ENCODE measurements at regions of chr16 and their contacts with region 1.

Region 1: DNA sequence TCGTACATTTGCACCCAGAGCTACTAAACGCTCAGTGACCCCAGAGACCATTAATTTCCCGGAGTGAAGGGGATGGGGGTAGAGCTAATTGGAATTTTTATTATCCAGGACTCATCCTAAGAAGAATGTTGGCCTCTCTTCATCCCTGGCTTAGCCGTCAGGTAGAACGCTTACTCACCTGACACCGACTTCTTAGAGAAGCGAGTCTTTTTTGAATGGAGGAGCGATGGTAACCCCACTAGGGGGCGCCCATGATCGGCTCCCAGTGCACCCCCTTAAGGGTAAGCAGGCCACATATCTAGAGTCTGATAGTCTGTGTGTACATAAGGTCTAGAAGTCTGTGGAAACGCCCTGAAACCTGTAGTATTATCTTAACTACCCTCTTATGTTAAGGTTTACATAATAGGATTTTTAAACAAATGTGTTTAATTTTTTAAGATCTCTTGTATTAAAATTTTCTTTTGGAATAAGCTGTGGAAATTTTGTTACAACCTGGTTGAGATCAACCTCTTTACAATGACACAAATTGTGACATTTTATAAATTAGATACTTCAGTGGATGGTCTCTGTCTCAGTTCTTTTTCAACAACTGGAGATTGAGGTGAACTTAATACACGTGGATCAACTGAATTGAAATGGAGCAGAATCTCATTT is 229.8 kb downstream of the CPPED1 start:
- DNase-seq: peak; percentile 52
- ATAC-seq: peak; percentile 94
- H3K4me3 ChIP-seq: no peak overlapping the region
- H3K27ac ChIP-seq: no peak overlapping the region
- H3K4me1 ChIP-seq: 0 out of 4 replicates have a peak, but pooled peaks cover 0 to 3% of the 10 kb centered on the region in 2 experiments
- H3K27me3 ChIP-seq: no peaks in the 10 kb centered on the region
- CTCF ChIP-seq: peak; percentile 81 to 93 (median 88)
- POLR2A ChIP-seq: no peak
- RAD21 ChIP-seq: peak; percentile 94

Region 2: GRCh38 chr16:12507366-12507765 is 66.5 kb before region 1 on chr16:
- CTCF ChIA-PET with region 1: no interaction called
- POLR2A ChIA-PET with region 1: no interaction called
- RAD21 ChIA-PET with region 1: no interaction called
- intact Hi-C with region 1: no loop called
- DNase-seq: no peak
- ATAC-seq: no peak
- H3K4me3 ChIP-seq: no peak overlapping the region
- H3K27ac ChIP-seq: no peak overlapping the region
- H3K4me1 ChIP-seq: no peaks in the 10 kb centered on the region
- H3K27me3 ChIP-seq: no peaks in the 10 kb centered on the region
- CTCF ChIP-seq: no peak
- POLR2A ChIP-seq: no peak
- RAD21 ChIP-seq: no peak

Region 3: DNA sequence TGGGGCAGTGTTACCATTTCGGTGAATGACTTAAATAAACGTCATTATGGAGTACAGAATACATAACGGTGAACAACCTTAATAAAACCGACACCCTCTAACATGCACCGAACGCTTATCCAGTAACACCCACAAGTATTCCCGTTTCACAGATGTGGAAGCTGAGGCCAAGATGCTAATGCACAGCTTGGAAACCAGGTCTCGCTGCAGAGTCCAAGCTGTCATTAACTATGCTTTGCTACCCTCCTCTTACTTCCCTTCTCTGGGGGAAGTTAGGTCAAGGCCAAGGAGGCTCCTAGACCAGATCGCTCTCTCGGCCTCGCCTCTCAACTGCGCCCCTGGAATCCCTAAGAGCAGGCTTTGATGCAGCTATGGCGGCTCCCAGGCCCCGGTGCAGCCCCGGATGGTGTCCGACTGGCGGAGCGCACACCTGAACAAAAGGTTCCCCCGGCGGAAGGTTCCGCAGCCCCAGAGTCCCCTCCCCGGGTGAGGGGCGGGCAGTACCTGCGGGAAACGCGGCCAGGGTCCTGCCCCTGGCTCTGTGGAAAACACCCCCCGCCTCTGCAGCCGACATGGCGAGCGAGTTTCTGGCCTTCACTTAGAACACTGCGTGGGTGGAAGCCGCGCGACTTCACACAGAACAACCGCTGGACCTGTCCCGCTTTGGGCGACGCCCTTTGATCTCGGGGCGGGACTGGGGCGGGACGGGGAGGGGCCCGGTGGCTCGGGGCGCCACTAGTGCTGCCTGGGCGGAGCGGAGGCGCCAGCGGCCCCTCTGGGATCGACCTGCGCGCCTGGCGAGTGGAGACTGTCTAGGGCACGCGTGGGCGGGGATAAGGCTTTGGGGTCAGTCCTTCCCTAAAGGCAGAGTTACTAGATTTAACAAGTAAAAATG is 229.6 kb after region 1 on chr16 and contains the start of gene CPPED1:
- CTCF ChIA-PET with region 1: interaction called, 3 read pairs
- POLR2A ChIA-PET with region 1: no interaction called
- RAD21 ChIA-PET with region 1: no interaction called
- intact Hi-C with region 1: loop called (anchors 5 kb)
- DNase-seq: peak; percentile 83
- ATAC-seq: peak; percentile 91
- H3K4me3 ChIP-seq: peak within 1 kb of the TSS; percentile 93 to 97
- H3K27ac ChIP-seq: peak within 1 kb of the TSS; percentile 75
- H3K4me1 ChIP-seq: peaks cover 10 to 23% of the 10 kb centered on the region in 2 experiments; a peak in 3 of 4 replicates
- H3K27me3 ChIP-seq: no peaks in the 10 kb centered on the region
- CTCF ChIP-seq: no peak
- POLR2A ChIP-seq: peak; percentile 86
- RAD21 ChIP-seq: no peak
- total RNA-seq, gene CPPED1: 8.1 TPM

Region 4: GRCh38 chr16:12819126-12820117 is 245.6 kb after region 1 on chr16:
- CTCF ChIA-PET with region 1: interaction called, 5 read pairs
- POLR2A ChIA-PET with region 1: interaction called, 4 read pairs
- RAD21 ChIA-PET with region 1: no interaction called
- intact Hi-C with region 1: loop called (anchors 1 kb)
- DNase-seq: peak; percentile 50
- ATAC-seq: peak; percentile 96
- H3K4me3 ChIP-seq: no peak overlapping the region
- H3K27ac ChIP-seq: no peak overlapping the region
- H3K4me1 ChIP-seq: no peaks in the 10 kb centered on the region
- H3K27me3 ChIP-seq: no peaks in the 10 kb centered on the region; the same call in 1 of the 2 replicates
- CTCF ChIP-seq: peak; percentile 73 to 93 (median 90)
- POLR2A ChIP-seq: no peak
- RAD21 ChIP-seq: peak; percentile 86

Region 5: GRCh38 chr16:12846592-12846991 is 272.7 kb after region 1 on chr16:
- CTCF ChIA-PET with region 1: no interaction called
- POLR2A ChIA-PET with region 1: no interaction called
- RAD21 ChIA-PET with region 1: no interaction called
- intact Hi-C with region 1: no loop called
- DNase-seq: no peak
- ATAC-seq: no peak
- H3K4me3 ChIP-seq: no peak overlapping the region
- H3K27ac ChIP-seq: no peak overlapping the region
- H3K4me1 ChIP-seq: no peaks in the 10 kb centered on the region
- H3K27me3 ChIP-seq: peaks cover 16% of the 10 kb centered on the region; the same call in 1 of the 2 replicates
- CTCF ChIP-seq: no peak
- POLR2A ChIP-seq: no peak
- RAD21 ChIP-seq: no peak

Region 6: DNA sequence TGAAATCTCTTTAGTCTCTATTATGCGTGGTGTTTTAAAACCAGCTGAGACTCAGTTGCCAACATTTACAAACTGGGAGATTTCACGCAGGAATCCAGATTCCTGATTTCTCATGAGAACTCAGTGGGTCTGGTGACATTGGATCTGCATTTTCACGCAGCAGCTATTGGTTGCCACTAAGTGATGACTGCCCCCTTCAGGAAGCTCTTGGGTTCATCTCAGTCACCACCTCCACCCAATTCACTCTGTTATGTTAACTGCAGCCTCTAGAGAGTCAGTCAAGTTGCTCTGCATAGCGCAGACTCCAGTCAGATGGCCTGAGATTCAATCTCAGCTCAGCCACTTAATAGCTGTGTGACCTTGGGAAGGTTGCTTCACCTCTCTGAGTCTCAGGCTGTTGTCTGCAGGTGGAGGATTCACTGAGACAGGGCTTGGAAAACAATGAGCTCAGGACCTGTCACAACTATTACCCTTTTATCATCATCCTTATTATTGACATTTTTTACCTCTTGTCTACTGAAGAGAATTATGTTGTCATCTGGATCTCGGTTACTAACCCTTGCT is 333.9 kb after region 1 on chr16:
- CTCF ChIA-PET with region 1: interaction called, 5 read pairs
- POLR2A ChIA-PET with region 1: no interaction called
- RAD21 ChIA-PET with region 1: no interaction called
- intact Hi-C with region 1: loop called (anchors 5 kb)
- DNase-seq: no peak
- ATAC-seq: peak; percentile 67
- H3K4me3 ChIP-seq: no peak overlapping the region
- H3K27ac ChIP-seq: no peak overlapping the region
- H3K4me1 ChIP-seq: no peaks in the 10 kb centered on the region
- H3K27me3 ChIP-seq: peaks cover 13% of the 10 kb centered on the region; the same call in 1 of the 2 replicates
- CTCF ChIP-seq: peak in 2 of 3 experiments; percentile 29 to 41; a peak in 3 of 6 replicates
- POLR2A ChIP-seq: no peak
- RAD21 ChIP-seq: peak; percentile 36

Region 7: DNA sequence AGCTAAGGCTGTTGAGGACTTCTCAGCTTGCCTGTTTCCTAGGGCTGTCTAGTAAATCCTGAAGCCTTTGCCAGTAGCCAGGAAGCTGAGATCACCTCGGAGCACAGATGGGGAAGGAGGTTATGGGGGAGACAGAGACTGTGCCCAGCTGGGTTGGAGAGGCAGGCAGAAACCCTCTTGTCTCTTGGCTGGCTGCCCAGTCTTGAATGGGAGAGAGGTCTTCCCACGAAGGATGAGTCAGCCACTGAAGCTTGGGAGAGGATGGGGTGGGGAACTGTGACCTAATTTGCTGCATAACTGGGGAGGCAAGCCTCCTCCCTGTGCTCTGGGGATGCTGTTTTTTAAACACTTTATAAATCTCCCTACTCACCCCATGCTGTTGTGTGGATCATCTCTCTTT is 397.4 kb after region 1 on chr16:
- CTCF ChIA-PET with region 1: no interaction called
- POLR2A ChIA-PET with region 1: no interaction called
- RAD21 ChIA-PET with region 1: no interaction called
- intact Hi-C with region 1: no loop called
- DNase-seq: no peak
- ATAC-seq: 0 out of 2 replicates have a peak, but pooled peaks have one; percentile 38
- H3K4me3 ChIP-seq: no peak overlapping the region
- H3K27ac ChIP-seq: no peak overlapping the region
- H3K4me1 ChIP-seq: peaks cover 0 to 5% of the 10 kb centered on the region in 2 experiments; a peak in 2 of 4 replicates
- H3K27me3 ChIP-seq: peaks cover 5% of the 10 kb centered on the region; the same call in 1 of the 2 replicates
- CTCF ChIP-seq: no peak
- POLR2A ChIP-seq: no peak
- RAD21 ChIP-seq: no peak

Region 8: GRCh38 chr16:13093661-13094060 is 519.8 kb after region 1 on chr16:
- CTCF ChIA-PET with region 1: no interaction called
- POLR2A ChIA-PET with region 1: no interaction called
- RAD21 ChIA-PET with region 1: no interaction called
- intact Hi-C with region 1: no loop called
- DNase-seq: no peak
- ATAC-seq: no peak
- H3K4me3 ChIP-seq: no peak overlapping the region
- H3K27ac ChIP-seq: no peak overlapping the region
- H3K4me1 ChIP-seq: no peaks in the 10 kb centered on the region
- H3K27me3 ChIP-seq: no peaks in the 10 kb centered on the region
- CTCF ChIP-seq: no peak
- POLR2A ChIP-seq: no peak
- RAD21 ChIP-seq: no peak